ENCODE measurements at regions of chr2 and their contacts with region 1.

Region 1: DNA sequence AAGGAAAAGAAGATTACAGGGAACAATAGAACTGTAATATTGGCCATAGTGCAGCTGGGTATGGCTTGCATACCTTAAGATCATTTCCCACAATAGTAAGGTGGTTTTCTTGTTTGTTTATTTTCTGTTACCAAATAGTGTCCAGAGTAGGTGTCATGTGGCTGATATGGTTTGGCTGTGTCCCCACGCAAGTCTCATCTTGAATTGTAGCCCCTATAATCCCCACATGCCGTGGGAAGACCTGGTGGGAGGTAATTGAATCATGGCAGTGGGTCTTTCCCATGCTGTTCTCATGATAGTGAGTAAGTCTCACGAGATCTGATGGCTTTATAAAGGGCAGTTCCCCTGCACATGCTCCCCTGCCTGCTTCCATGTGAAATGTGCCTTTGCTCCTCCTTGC is 190.1 kb downstream of the ICOS start:
- DNase-seq: no peak
- ATAC-seq: no peak
- H3K4me3 ChIP-seq: no peak overlapping the region
- H3K27ac ChIP-seq: no peak overlapping the region
- H3K4me1 ChIP-seq: no peaks in the 10 kb centered on the region
- H3K27me3 ChIP-seq: peaks cover 0 to 8% of the 10 kb centered on the region in 2 experiments; a peak in 1 of 5 replicates
- CTCF ChIP-seq: no peak
- EP300 ChIP-seq: no peak
- POLR2A ChIP-seq: no peak
- RAD21 ChIP-seq: no peak

Region 2: GRCh38 chr2:203718087-203718486 is 408.6 kb before region 1 on chr2:
- CTCF ChIA-PET with region 1: no interaction called
- POLR2A ChIA-PET with region 1: no interaction called
- in situ Hi-C with region 1: no loop called
- intact Hi-C with region 1: no loop called
- DNase-seq: no peak
- ATAC-seq: no peak
- H3K4me3 ChIP-seq: no peak overlapping the region
- H3K27ac ChIP-seq: no peak overlapping the region
- H3K4me1 ChIP-seq: peaks cover 41% of the 10 kb centered on the region
- H3K27me3 ChIP-seq: peaks cover 0 to 7% of the 10 kb centered on the region in 2 experiments; a peak in 1 of 5 replicates
- CTCF ChIP-seq: no peak
- EP300 ChIP-seq: no peak
- POLR2A ChIP-seq: no peak
- RAD21 ChIP-seq: no peak

Region 3: DNA sequence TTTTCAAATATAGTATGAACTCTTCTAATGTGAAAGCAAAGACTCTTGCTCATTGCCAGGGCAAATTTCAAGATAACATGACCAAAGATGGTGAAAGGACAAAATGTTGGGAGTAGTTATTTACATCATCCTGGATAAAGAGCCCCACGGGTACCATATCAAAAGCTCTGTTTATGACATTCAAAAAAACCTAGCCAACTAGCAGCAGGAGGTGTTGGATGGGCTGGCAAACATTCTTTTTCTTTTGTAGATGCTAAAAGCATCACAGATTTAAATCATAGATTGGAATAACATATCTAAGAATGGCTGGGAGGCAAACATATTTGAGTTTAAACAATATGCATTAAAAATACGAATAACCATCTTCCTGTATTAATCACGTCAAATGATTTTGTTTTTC is 36.7 kb before region 1 on chr2:
- CTCF ChIA-PET with region 1: no interaction called
- POLR2A ChIA-PET with region 1: no interaction called
- in situ Hi-C with region 1: no loop called
- intact Hi-C with region 1: loop called (anchors 1 kb)
- DNase-seq: no peak
- ATAC-seq: no peak
- H3K4me3 ChIP-seq: no peak overlapping the region
- H3K27ac ChIP-seq: no peak overlapping the region
- H3K4me1 ChIP-seq: no peaks in the 10 kb centered on the region
- H3K27me3 ChIP-seq: no peaks in the 10 kb centered on the region
- CTCF ChIP-seq: no peak
- EP300 ChIP-seq: no peak
- POLR2A ChIP-seq: no peak
- RAD21 ChIP-seq: no peak

Region 4: GRCh38 chr2:204407204-204408070 is 280.7 kb after region 1 on chr2:
- CTCF ChIA-PET with region 1: no interaction called
- POLR2A ChIA-PET with region 1: no interaction called
- in situ Hi-C with region 1: no loop called
- intact Hi-C with region 1: no loop called
- DNase-seq: peak; percentile 84
- ATAC-seq: peak; percentile 100
- H3K4me3 ChIP-seq: no peak overlapping the region
- H3K27ac ChIP-seq: peak overlapping the region; percentile 9
- H3K4me1 ChIP-seq: peaks cover 12% of the 10 kb centered on the region
- H3K27me3 ChIP-seq: no peaks in the 10 kb centered on the region
- CTCF ChIP-seq: no peak
- EP300 ChIP-seq: peak in 1 of 2 experiments; percentile 52; a peak in 1 of 4 replicates
- POLR2A ChIP-seq: no peak
- RAD21 ChIP-seq: no peak

Measured in HepG2 (cell line).